ENCODE measurements at regions of chr6 and their contacts with region 1.

Region 1: DNA sequence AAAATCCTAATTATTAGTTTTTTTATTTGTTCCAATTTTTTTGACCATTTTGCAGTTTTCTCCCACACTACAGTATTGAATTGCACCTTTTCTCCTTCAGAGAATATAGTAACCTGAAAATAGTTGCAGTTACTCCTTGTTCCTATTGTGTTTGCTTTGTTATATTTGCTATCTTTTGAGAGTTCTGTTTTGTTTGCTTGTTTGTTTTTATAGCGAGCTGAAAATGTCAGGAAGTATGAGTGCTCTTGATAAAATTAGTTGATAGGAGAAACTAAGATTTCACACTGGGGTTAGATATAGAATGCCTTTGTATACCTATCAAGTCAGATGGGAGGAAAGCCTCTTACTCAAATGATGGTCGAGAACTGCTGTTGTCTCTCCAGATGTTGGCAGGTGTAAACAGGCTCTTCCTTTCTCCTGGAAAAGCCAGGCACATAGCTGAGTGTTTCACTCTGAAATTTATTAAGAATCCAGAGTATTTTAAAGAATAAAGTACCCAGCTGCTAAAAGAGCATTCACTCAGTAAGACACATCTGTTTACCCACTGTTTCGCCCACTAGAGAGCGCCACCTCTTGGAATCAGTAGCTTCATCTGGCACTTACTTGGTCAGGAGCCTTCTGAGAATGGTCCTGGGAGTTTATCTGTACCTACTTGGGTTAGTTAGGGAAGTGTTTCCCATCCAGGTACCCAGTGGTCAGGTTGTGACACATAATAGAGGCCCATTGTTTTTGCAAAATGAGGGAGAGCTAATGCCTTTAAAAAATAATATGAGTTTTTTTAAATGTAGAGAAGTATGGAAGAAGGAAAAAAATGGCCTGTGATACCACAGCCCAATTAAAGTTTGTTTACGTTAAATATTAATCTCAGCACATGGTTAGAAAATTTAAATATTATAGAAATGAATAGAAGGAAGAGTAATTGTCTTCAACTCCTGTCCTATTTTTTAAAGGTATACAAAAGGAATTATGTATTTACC is 11.2 kb downstream of the NT5DC1 start:
- DNase-seq: no peak
- CTCF ChIP-seq: peak; percentile 53

Region 2: DNA sequence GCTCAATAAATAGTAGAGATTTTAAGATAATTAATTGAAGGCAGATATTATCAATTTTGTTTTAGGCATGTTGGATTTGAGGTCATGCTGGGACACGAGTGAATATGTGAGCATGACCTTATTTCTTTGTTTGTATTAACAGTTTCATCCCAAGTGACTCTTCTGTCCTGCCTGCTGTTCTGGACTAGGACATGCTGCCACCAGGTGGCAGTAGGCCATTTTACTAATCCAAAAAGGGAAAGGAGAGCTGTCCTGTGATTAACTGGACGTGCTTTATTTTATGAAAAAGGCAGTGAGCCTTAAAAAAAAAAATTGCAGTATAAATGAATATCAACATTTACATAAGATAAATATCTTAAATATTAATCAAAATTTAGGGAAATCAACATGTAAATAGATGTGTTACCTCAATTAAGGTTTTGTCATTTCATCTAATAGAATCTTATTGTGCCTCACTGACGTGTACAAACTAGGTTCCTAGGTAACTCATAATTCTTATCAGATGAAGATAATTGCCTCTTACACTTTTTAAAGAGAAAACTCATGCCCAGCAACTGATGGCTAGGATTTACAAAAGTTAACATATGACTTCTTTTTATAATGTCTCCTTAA is 100.9 kb before region 1 on chr6:
- CTCF ChIA-PET with region 1: interaction called, 24 read pairs
- POLR2A ChIA-PET with region 1: no interaction called
- DNase-seq: peak; percentile 15
- CTCF ChIP-seq: peak; percentile 80

Region 3: GRCh38 chr6:116136933-116137340 is 25.1 kb after region 1 on chr6:
- CTCF ChIA-PET with region 1: interaction called, 16 read pairs
- POLR2A ChIA-PET with region 1: no interaction called
- DNase-seq: no peak
- CTCF ChIP-seq: no peak